GM12878 (cell line): ENCODE measurements at regions of chr4 and their contacts with region 1.

Region 1: DNA sequence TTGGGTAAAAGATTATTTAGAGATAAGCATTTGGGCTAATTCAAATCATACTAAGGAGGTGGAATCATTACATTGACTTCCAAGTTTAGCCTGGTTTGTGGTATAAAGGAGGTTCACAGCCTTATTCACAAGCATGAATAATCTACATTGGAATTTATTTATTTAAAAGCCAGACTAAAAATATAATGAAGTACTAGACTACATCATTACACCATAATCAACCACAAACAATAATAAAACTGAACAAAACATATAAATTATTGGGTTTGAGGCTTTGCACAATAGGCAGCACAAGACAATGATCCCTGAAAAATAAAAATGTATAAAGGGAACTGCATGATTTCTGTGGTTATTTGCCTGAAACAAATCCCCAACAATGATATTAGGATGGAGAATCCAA is 314.0 kb downstream of the GBA3 start:
- DNase-seq: no peak
- ATAC-seq: no peak
- H3K4me3 ChIP-seq: no peak overlapping the region
- H3K27ac ChIP-seq: no peak overlapping the region
- H3K4me1 ChIP-seq: no peaks in the 10 kb centered on the region
- H3K27me3 ChIP-seq: no peaks in the 10 kb centered on the region
- CTCF ChIP-seq: no peak
- EP300 ChIP-seq: no peak
- POLR2A ChIP-seq: no peak
- RAD21 ChIP-seq: no peak

Region 2: GRCh38 chr4:23016981-23017380 is 10.2 kb after region 1 on chr4:
- CTCF ChIA-PET with region 1: interaction called, 3 read pairs
- POLR2A ChIA-PET with region 1: no interaction called
- RAD21 ChIA-PET with region 1: interaction called, 3 read pairs
- SMC1A ChIA-PET with region 1: interaction called, 10 read pairs
- in situ Hi-C with region 1: no loop called
- intact Hi-C with region 1: no loop called
- DNase-seq: no peak
- ATAC-seq: no peak
- H3K4me3 ChIP-seq: no peak overlapping the region
- H3K27ac ChIP-seq: no peak overlapping the region
- H3K4me1 ChIP-seq: no peaks in the 10 kb centered on the region
- H3K27me3 ChIP-seq: no peaks in the 10 kb centered on the region
- CTCF ChIP-seq: no peak
- EP300 ChIP-seq: no peak
- POLR2A ChIP-seq: no peak
- RAD21 ChIP-seq: no peak

Region 3: GRCh38 chr4:23279377-23279988 is 272.7 kb after region 1 on chr4:
- CTCF ChIA-PET with region 1: no interaction called
- POLR2A ChIA-PET with region 1: no interaction called
- RAD21 ChIA-PET with region 1: no interaction called
- SMC1A ChIA-PET with region 1: no interaction called
- in situ Hi-C with region 1: no loop called
- intact Hi-C with region 1: no loop called
- DNase-seq: no peak
- ATAC-seq: no peak
- H3K4me3 ChIP-seq: no peak overlapping the region
- H3K27ac ChIP-seq: no peak overlapping the region
- H3K4me1 ChIP-seq: no peaks in the 10 kb centered on the region
- H3K27me3 ChIP-seq: no peaks in the 10 kb centered on the region
- CTCF ChIP-seq: no peak
- EP300 ChIP-seq: no peak
- POLR2A ChIP-seq: no peak
- RAD21 ChIP-seq: no peak

Region 4: DNA sequence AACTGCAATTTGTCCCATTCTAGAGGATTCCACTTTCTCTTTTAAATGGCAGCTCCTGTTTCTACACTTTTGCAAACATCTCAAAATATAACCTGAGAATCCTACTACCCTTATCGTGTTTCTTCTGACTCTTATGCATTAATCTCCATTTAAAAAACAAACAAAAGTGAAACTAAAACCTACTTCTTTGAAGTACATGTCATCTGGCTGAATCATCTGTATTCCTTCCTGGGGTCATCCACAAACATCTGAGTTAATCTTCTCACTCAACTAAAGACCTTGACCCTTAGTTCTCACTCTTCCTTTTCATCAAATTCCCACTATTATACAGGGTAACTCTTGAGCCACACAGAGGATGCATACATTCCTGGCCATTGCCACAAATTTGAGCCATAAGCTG is 298.3 kb after region 1 on chr4:
- CTCF ChIA-PET with region 1: no interaction called
- POLR2A ChIA-PET with region 1: no interaction called
- RAD21 ChIA-PET with region 1: no interaction called
- SMC1A ChIA-PET with region 1: no interaction called
- in situ Hi-C with region 1: no loop called
- intact Hi-C with region 1: no loop called
- DNase-seq: no peak
- ATAC-seq: peak; percentile 80
- H3K4me3 ChIP-seq: 0 out of 2 replicates have a peak overlapping the region, but pooled peaks have one; percentile 32
- H3K27ac ChIP-seq: no peak overlapping the region
- H3K4me1 ChIP-seq: no peaks in the 10 kb centered on the region
- H3K27me3 ChIP-seq: no peaks in the 10 kb centered on the region
- CTCF ChIP-seq: no peak
- EP300 ChIP-seq: no peak
- POLR2A ChIP-seq: no peak
- RAD21 ChIP-seq: no peak

Region 5: DNA sequence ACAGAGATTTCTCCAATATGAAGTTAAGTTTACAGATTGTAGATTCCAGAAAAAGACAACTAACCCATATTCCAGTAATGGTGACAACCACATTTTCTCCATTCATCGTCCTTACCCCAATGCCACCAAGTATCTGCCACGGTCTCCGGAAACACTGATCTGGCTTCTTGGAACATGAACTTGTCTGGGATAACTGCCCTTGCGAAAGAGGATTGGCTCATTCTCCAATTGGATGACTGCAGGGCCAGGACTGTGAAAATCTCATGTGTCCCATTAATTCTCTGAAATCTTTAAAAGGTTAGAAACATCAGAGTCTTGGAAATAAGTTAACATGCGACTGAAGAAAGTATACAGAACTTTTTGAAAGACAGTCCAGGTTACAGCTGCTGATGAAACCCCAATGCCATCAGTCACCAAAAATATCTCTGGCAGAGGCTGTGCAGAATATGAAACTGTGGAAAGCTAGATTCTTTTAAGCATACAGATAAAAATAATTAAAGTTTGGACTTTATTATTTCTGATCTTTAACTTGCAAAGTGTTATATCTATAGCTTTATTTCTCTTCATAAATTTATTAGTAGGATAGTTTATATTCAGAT is 386.2 kb after region 1 on chr4:
- CTCF ChIA-PET with region 1: no interaction called
- POLR2A ChIA-PET with region 1: no interaction called
- RAD21 ChIA-PET with region 1: no interaction called
- SMC1A ChIA-PET with region 1: no interaction called
- in situ Hi-C with region 1: no loop called
- intact Hi-C with region 1: no loop called
- DNase-seq: no peak
- ATAC-seq: no peak
- H3K4me3 ChIP-seq: no peak overlapping the region
- H3K27ac ChIP-seq: no peak overlapping the region
- H3K4me1 ChIP-seq: no peaks in the 10 kb centered on the region
- H3K27me3 ChIP-seq: no peaks in the 10 kb centered on the region
- CTCF ChIP-seq: no peak
- EP300 ChIP-seq: no peak
- POLR2A ChIP-seq: no peak
- RAD21 ChIP-seq: no peak